MCF 10A (cell line): ENCODE measurements at regions of chr20 and their contacts with region 1.

Region 1: GRCh38 chr20:36461600-36462439 is 79.5 kb upstream of the MYL9 start:
- DNase-seq: peak; percentile 47
- H3K4me3 Mint-ChIP-seq: peak overlapping the region; percentile 92
- H3K27ac Mint-ChIP-seq: peak overlapping the region; percentile 89
- H3K4me1 Mint-ChIP-seq: peaks cover 21% of the 10 kb centered on the region
- H3K27me3 Mint-ChIP-seq: no peaks in the 10 kb centered on the region
- CTCF ChIP-seq: no peak

Region 2: DNA sequence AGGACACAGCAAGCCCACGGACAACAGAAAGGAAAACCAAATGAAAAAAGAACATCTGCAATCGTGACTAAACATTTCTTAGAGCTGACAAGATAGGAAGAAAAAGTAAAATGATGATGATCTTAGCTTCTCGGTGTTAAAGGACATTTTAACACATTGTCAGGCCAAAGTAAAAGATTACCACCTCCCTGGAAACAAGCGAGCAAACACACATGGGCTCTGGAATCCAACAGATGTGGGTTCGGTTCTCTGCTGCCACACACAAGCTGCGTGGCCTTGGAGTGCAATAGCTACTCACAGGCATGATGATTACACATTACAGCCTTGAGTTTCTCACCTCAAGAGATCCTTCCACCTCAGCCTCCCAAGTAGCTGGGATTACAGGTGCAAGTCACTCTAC is 233.1 kb before region 1 on chr20:
- CTCF ChIA-PET with region 1: no interaction called
- POLR2A ChIA-PET with region 1: no interaction called
- intact Hi-C with region 1: no loop called
- DNase-seq: no peak
- H3K4me3 Mint-ChIP-seq: no peak overlapping the region
- H3K27ac Mint-ChIP-seq: no peak overlapping the region
- H3K4me1 Mint-ChIP-seq: no peaks in the 10 kb centered on the region
- H3K27me3 Mint-ChIP-seq: no peaks in the 10 kb centered on the region
- CTCF ChIP-seq: no peak

Region 3: DNA sequence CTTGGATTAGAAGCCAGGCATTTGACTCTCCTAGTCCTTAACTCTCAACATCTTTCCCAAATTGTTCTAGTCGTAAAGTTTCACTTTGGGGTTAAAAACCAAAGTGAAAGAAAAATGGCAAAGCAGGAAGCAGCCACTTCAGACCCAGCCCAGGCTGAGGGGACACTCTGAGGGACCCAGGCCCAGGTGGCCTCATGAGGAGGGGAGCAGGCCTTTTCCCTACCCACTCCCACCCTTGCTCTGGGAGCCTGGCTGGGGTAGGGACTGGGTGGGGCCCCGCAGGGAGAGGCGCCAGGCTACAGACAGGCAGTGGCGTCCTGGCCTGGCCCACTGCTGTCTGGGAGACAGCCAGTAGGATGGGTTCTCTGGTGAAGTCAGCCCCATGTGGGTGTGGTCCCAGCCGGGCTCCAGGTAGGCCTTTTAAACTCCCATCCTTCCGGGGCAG is 10.8 kb after region 1 on chr20:
- CTCF ChIA-PET with region 1: interaction called, 4 read pairs
- POLR2A ChIA-PET with region 1: interaction called, 24 read pairs
- intact Hi-C with region 1: no loop called
- DNase-seq: peak; percentile 58
- H3K4me3 Mint-ChIP-seq: peak overlapping the region; percentile 19
- H3K27ac Mint-ChIP-seq: peak overlapping the region; percentile 59
- H3K4me1 Mint-ChIP-seq: peaks cover 25% of the 10 kb centered on the region
- H3K27me3 Mint-ChIP-seq: no peaks in the 10 kb centered on the region
- CTCF ChIP-seq: no peak

Region 4: DNA sequence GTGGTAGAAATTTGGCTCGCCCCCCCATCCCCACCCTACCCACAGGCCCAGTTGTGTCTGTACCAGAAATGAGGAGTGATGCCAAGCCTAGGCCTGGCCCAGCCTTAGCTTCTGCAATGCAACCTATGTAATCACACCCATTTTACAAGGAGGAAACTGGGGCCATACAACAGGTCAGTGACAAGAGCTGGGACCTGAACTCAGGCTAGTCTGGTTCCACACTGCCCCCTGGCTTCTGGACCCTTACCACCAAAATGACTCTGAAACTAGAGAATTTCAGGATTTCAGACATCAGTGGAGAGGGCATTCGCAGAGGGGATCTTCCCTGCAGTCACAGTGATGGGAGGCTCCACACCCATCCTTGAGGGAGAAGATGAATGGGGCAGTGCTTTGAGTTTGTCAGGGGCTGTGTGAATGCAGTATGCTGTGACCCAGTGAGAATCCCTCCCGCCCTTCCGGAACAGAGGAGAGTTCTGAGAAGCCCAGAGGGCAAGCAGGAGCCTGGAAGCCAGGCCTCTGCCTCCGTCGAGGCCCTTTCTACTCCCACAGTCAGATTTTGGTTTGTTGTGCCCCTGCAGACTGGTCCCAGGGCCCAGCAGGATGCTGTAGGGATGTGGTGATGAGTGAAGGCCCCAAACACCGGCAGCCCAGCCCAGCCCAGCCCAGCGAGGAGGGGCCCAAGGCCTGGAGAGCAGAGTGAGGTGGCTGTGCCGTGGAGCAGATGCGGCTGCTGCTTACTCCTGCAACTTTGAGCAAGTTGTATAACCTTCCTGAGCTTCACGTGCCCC is 31.4 kb after region 1 on chr20:
- CTCF ChIA-PET with region 1: interaction called, 3 read pairs
- POLR2A ChIA-PET with region 1: interaction called, 22 read pairs
- intact Hi-C with region 1: no loop called
- DNase-seq: no peak
- H3K4me3 Mint-ChIP-seq: no peak overlapping the region
- H3K27ac Mint-ChIP-seq: peak overlapping the region; percentile 55
- H3K4me1 Mint-ChIP-seq: peaks cover 39% of the 10 kb centered on the region
- H3K27me3 Mint-ChIP-seq: no peaks in the 10 kb centered on the region
- CTCF ChIP-seq: peak; percentile 20

Region 5: GRCh38 chr20:36792422-36792821 is 330.6 kb after region 1 on chr20:
- CTCF ChIA-PET with region 1: no interaction called
- POLR2A ChIA-PET with region 1: no interaction called
- intact Hi-C with region 1: no loop called
- DNase-seq: peak; percentile 36
- H3K4me3 Mint-ChIP-seq: no peak overlapping the region
- H3K27ac Mint-ChIP-seq: no peak overlapping the region
- H3K4me1 Mint-ChIP-seq: no peaks in the 10 kb centered on the region
- H3K27me3 Mint-ChIP-seq: no peaks in the 10 kb centered on the region
- CTCF ChIP-seq: peak; percentile 20